BJ (cell line): ENCODE measurements at regions of chr14 and their contacts with region 1.

Region 1: DNA sequence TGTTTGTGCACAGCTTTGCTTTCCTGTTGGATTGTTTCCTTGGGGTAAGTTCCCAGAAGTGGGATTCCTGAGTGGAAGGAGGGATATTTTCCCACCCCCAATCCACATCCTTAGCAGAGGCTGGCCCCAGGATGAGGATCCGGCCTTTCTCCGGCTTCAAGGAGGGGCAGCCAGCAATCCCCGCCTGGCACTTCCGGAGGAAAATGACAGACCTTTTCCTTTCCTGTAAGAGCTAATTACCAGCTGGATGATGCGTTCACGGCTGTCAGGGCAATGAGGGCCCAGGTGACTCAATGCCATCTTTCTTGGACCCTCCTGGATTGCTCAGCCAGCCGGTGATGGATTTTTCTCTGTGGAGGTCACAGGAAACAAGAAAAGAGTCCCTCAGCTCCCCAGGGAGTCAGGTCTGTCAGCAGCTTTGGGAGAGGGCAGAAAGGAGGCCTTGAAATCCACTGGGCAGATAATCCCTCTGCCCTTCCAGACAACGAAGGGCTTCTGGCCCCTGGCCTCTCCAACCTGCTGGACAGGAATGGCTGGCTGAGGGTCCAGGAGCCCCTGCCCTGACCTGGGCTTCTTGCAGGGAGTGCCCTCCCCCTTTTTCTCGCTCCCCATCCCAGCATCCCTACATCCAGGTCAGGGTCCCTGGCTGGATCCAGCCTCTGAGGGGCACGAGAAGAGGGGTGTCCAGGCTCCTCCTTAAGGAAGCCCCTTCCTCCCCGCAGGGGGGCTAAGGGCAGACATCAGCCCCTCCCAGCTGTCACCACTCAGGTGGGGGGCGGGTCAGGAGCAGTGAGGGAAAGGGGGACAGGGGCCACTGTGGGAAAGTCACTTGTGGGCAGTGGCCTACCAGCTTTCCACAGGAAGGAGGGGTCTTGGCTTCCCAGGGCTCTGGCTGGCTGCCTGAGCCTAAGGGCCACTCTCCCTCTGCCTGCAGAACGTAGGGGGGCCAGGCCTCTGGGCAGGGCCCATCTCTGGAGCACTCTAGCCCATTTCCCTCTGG is 16.1 kb upstream of the CCDC85C start:
- DNase-seq: no peak
- H3K4me3 ChIP-seq: no peak overlapping the region
- H3K27me3 ChIP-seq: no peaks in the 10 kb centered on the region
- CTCF ChIP-seq: no peak

Region 2: DNA sequence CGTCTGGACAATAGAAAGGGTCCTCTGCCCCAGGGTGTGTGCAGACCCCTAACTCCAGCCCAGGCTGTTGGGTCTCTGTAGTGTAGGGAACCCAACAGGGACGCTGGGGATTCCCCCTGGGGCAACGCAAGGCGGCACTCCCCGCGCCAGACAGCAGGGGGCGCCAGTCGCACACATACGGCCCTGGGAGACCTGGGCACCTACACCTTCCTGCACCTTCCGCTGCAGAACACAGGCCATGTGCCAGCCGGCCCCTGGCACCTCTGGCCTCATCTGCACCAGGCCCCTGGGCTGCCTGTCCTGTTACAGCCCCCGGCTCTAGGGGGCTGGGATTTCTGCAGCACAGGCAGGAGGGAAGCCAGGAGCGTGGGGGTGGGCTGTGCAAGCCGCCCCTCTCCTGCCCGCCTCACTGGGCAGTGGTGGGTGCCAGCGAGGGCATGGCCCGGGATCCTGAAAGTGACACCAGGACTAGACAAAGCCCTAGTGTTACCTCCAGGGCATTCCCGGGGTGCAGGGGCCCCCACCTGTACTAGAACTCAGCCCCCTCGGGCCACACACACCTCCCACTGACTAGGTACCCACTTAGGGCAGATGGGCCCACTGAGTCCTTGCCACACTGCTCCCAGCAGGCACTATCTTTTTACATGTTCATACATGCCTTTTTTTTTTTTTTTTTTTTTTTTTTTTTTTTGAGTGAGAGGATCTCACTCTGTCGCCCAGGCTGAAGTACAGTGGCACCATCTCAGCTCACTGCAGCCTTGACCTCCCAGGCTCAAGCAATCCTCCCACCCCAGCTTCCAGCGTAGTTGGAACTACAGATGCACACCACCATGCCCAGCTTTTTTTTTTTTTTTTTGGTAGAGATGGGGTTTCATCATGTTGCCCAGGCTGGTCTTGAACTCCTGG is 101.4 kb before region 1 on chr14:
- CTCF ChIA-PET with region 1: interaction called, 14 read pairs
- POLR2A ChIA-PET with region 1: no interaction called
- DNase-seq: no peak
- H3K4me3 ChIP-seq: no peak overlapping the region
- H3K27me3 ChIP-seq: no peaks in the 10 kb centered on the region
- CTCF ChIP-seq: peak; percentile 97

Region 3: GRCh38 chr14:99590712-99591555 is 29.2 kb before region 1 on chr14:
- CTCF ChIA-PET with region 1: no interaction called
- POLR2A ChIA-PET with region 1: no interaction called
- DNase-seq: no peak
- H3K4me3 ChIP-seq: no peak overlapping the region
- H3K27me3 ChIP-seq: no peaks in the 10 kb centered on the region
- CTCF ChIP-seq: no peak

Region 4: DNA sequence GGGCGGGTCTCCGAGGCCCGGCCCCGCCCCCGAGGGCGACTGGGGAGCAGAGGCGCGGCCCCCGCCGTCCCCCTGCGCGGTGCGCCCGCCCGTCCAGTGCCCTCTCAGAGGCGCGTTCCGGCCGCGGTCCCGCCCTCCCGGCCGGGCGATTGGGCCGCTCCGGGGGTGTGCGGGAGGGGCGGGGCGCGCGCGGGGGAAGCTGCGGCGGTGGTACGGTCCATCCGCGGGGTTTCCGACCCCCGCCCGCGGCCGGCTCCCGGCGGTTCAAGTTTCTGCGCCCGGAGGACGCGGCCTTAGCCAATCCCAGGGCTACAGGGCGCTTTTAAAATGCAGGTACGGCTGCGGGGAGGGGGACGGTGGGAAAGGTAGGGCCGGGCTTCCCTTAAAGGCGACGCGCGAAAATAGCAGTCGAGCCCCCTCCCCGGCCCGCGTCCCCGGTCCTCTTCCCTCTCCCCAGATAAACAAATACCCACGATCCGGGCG is 15.8 kb before region 1 on chr14:
- CTCF ChIA-PET with region 1: interaction called, 15 read pairs
- POLR2A ChIA-PET with region 1: interaction called, 3 read pairs
- DNase-seq: peak; percentile 43
- H3K4me3 ChIP-seq: peak overlapping the region; percentile 77
- H3K27me3 ChIP-seq: no peaks in the 10 kb centered on the region
- CTCF ChIP-seq: no peak

Region 5: GRCh38 chr14:99609245-99610117 is 10.7 kb before region 1 on chr14:
- CTCF ChIA-PET with region 1: interaction called, 15 read pairs
- POLR2A ChIA-PET with region 1: no interaction called
- DNase-seq: no peak
- H3K4me3 ChIP-seq: no peak overlapping the region
- H3K27me3 ChIP-seq: no peaks in the 10 kb centered on the region
- CTCF ChIP-seq: peak; percentile 64